ENCODE measurements at regions of chr1 and their contacts with region 1.

Region 1: DNA sequence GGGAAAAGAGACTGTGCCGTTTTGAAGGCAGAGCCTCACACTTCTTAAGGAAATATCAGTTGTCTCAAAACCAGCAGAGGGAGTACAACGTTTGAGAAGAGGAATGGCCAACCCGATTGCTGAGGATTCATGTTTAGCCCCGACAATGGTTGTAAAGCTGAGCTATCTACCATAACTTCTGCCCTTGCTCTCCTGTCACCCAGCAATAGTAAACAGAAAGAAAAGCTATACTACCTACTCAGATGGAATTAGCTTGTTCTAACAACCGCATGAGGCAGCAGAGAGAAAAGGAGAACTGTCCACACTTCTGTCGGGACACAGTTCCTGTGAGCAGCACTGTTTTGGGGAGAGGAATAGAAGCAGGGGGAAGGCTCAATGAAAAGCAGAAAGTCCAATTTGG is 91.2 kb downstream of the SLC45A1 start:
- DNase-seq: no peak
- H3K4me3 Mint-ChIP-seq: no peak overlapping the region
- H3K27ac Mint-ChIP-seq: peak overlapping the region; percentile 43
- H3K4me1 Mint-ChIP-seq: peaks cover 61% of the 10 kb centered on the region
- H3K27me3 Mint-ChIP-seq: no peaks in the 10 kb centered on the region

Region 2: GRCh38 chr1:8396786-8397406 is 12.2 kb before region 1 on chr1:
- CTCF ChIA-PET with region 1: interaction called, 11 read pairs
- POLR2A ChIA-PET with region 1: interaction called, 7 read pairs
- DNase-seq: peak; percentile 39
- H3K4me3 Mint-ChIP-seq: no peak overlapping the region
- H3K27ac Mint-ChIP-seq: peak overlapping the region; percentile 58
- H3K4me1 Mint-ChIP-seq: peaks cover 64% of the 10 kb centered on the region
- H3K27me3 Mint-ChIP-seq: no peaks in the 10 kb centered on the region

Region 3: DNA sequence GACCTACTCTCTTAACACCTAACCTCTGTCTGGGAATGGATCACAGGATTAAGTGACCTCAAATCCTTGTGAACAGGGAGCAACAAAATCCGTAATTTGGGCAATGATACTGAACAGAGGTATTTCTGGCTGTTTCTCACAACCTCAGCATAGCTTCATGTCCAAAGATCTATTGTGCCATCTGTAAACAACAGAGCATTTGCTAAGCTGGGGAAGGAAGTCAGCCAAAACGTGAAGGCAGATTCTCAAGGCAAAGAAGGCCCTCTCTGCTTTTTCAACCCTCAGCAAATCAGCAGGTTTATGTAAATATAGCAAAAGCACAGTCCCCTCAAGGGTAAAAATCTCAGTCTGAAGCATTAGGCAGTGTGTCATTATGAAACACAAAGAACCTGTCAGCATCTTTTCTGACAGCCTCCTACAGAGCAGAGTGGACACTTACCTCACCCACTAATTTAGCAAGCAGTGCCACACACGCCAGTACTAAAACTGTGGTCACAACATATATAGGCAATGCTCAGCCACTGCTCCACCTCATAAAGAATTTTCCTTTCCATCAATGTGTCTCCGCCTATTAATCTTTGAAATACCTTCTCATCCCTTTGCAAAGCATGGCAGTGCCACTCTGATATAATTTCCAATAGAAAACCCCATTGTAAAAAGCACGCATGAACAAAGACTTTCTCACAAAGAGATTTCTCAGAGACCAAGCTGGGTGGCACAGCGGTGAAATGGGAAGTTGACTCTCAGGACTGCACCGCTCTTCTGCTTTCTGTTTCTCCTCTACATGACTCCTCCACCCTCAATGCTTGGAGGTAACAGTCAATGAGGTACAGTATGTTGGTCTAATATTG is 220.4 kb after region 1 on chr1:
- CTCF ChIA-PET with region 1: no interaction called
- POLR2A ChIA-PET with region 1: no interaction called
- DNase-seq: no peak
- H3K4me3 Mint-ChIP-seq: no peak overlapping the region
- H3K27ac Mint-ChIP-seq: no peak overlapping the region
- H3K4me1 Mint-ChIP-seq: peaks cover 33% of the 10 kb centered on the region
- H3K27me3 Mint-ChIP-seq: no peaks in the 10 kb centered on the region